ENCODE measurements at regions of chr12 and their contacts with region 1.

Region 1: DNA sequence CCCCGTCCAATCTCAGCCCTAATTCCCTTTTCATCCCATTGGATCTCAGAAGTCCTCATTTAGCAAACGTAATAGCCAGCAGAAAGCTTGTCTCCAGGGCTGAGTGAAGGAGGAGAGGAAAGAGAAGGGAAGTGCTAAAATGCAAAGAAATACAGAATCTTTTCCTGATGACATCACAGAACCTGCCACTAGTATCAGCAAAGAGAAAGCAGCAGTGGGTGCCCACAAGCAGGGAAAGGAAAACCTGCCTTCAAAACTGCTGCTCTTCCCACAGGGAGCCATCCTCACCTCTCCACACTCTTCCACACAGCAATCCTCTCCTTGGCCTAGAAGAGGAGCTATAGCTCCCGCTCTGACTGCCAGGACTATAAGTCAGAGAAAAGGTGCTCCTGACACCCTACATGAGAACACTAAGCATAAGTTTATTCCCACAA is 11.3 kb downstream of the MED13L start:
- DNase-seq: no peak
- H3K4me3 ChIP-seq: no peak overlapping the region
- H3K27me3 ChIP-seq: no peaks in the 10 kb centered on the region
- CTCF ChIP-seq: peak; percentile 21; the same call in 1 of the 2 replicates

Region 2: GRCh38 chr12:116282371-116283286 is 16.4 kb after region 1 on chr12:
- CTCF ChIA-PET with region 1: no interaction called
- POLR2A ChIA-PET with region 1: no interaction called
- DNase-seq: no peak
- H3K4me3 ChIP-seq: no peak overlapping the region
- H3K27me3 ChIP-seq: no peaks in the 10 kb centered on the region
- CTCF ChIP-seq: no peak

Region 3: DNA sequence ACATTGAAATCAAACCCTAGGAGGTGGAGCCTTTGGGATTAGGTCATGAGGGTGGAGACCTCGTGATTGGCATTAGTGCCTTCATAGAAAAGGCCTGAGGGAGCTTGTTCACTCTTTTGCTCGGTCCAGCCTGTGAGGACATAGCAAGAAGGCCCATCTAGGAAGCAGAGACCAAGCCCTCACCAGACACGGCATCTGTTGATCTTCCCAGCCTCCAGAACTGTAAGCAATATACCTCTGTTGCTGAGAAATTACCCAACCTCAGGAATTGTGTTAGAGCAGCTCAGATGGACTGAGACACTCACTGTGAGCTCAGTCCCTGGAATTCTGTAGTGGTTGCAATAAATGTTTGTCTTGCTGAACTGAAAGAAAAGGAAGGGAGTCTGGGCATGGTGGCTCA is 176.8 kb after region 1 on chr12:
- CTCF ChIA-PET with region 1: no interaction called
- POLR2A ChIA-PET with region 1: interaction called, 14 read pairs
- DNase-seq: no peak
- H3K4me3 ChIP-seq: no peak overlapping the region
- H3K27me3 ChIP-seq: no peaks in the 10 kb centered on the region
- CTCF ChIP-seq: no peak

Measured in BJ (cell line).